Endothelial cell of umbilical vein (primary cell): ENCODE measurements at regions of chr2 and their contacts with region 1.

Region 1: DNA sequence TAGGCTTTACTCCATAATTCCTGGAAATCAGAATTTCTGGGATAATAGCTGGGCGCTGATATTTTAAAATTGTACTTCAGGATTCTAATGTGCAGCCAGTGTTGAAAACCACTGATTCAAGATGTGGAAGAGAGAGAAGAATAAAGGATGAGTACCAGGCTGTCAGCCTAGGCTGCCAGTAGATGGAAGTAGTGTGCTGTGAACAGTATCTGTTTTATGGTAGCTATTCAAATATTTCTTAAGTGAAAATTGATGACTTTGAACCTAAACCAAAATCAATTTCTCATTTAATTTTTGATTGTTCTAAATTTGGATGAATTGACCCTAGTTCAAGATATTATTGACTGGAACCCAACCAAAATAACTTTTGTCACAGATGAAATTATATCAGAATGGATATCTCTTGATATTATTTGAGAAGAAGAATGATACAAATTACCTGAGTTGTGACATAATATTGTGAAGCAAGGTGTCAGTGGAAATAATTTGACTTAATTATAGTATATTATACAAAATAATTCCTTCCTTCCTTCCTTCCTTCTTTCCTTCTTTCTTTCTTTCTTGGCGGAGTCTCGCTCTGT is 88.1 kb downstream of the COMMD1 start:
- DNase-seq: peak; percentile 72
- H3K4me3 ChIP-seq: no peak overlapping the region
- H3K27ac ChIP-seq: no peak overlapping the region
- H3K4me1 ChIP-seq: no peaks in the 10 kb centered on the region
- H3K27me3 ChIP-seq: no peaks in the 10 kb centered on the region
- CTCF ChIP-seq: peak; percentile 50 to 59
- POLR2A ChIP-seq: no peak

Region 2: GRCh38 chr2:61922714-61923113 is 70.8 kb before region 1 on chr2:
- CTCF ChIA-PET with region 1: interaction called, 4 read pairs
- POLR2A ChIA-PET with region 1: no interaction called
- dilution Hi-C with region 1: no loop called
- intact Hi-C with region 1: loop called (anchors 2 kb)
- DNase-seq: no peak
- H3K4me3 ChIP-seq: no peak overlapping the region
- H3K27ac ChIP-seq: no peak overlapping the region
- H3K4me1 ChIP-seq: no peaks in the 10 kb centered on the region
- H3K27me3 ChIP-seq: no peaks in the 10 kb centered on the region
- CTCF ChIP-seq: no peak
- POLR2A ChIP-seq: no peak

Region 3: GRCh38 chr2:62195421-62196277 is 202.1 kb after region 1 on chr2 and contains the start of gene B3GNT2:
- CTCF ChIA-PET with region 1: interaction called, 10 read pairs
- POLR2A ChIA-PET with region 1: no interaction called
- dilution Hi-C with region 1: no loop called
- intact Hi-C with region 1: loop called (anchors 5 kb)
- DNase-seq: peak; percentile 70
- H3K4me3 ChIP-seq: peak within 1 kb of the TSS; percentile 82 to 98 (median 98)
- H3K27ac ChIP-seq: peak within 1 kb of the TSS; percentile 45
- H3K4me1 ChIP-seq: peaks cover 13% of the 10 kb centered on the region
- H3K27me3 ChIP-seq: peaks cover 0 to under 1% of the 10 kb centered on the region in 2 experiments
- CTCF ChIP-seq: no peak
- POLR2A ChIP-seq: peak; percentile 82
- total RNA-seq, gene B3GNT2: 17.8 and 21.2 TPM in 2 replicates

Region 4: DNA sequence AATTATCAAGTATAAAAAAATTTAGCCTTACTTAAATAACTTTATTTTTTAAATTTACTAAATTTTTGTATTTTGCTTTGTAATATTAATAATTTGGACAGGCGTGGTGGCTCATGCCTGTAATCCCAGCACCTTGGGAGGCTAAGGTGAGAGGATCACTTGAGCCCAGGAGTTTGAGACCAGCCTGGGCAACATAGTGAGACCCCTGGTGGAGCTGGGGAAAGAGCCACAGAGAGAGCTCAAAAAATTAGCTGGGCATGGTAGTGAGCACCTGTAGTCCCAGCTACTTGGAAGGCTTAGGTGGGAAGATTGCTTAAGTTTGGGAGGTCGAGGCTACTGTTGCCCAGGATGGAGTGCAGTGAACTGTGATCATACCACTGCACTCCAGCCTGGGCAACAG is 345.9 kb after region 1 on chr2:
- CTCF ChIA-PET with region 1: interaction called, 29 read pairs
- POLR2A ChIA-PET with region 1: no interaction called
- dilution Hi-C with region 1: no loop called
- intact Hi-C with region 1: no loop called
- DNase-seq: no peak
- H3K4me3 ChIP-seq: no peak overlapping the region
- H3K27ac ChIP-seq: no peak overlapping the region
- H3K4me1 ChIP-seq: no peaks in the 10 kb centered on the region
- H3K27me3 ChIP-seq: no peaks in the 10 kb centered on the region
- CTCF ChIP-seq: peak in 1 of 2 donors; percentile 13
- POLR2A ChIP-seq: no peak

Region 5: DNA sequence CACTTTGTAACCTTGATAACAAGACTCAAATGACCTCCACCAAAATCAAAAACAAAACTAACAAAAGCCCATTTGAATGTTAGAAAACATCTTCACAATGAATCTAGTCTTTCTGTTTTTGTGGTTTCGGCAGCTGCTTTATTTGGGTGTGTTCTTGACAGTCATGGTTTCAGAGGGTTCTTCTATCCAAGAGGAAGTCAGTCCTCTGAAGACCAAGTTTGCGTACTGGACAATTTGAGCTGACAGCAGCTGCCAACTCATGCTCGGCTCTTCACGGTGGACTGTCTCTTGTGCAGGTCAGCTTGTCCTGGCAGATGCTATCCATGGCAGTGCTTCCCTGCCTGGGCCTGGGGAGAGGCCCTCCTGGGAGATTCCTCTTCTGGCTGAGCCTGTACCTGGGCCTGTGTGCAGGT is 421.5 kb after region 1 on chr2:
- CTCF ChIA-PET with region 1: interaction called, 159 read pairs
- POLR2A ChIA-PET with region 1: no interaction called
- dilution Hi-C with region 1: no loop called
- intact Hi-C with region 1: loop called (anchors 1 kb)
- DNase-seq: no peak
- H3K4me3 ChIP-seq: no peak overlapping the region
- H3K27ac ChIP-seq: no peak overlapping the region
- H3K4me1 ChIP-seq: peaks cover 6% of the 10 kb centered on the region
- H3K27me3 ChIP-seq: no peaks in the 10 kb centered on the region
- CTCF ChIP-seq: no peak
- POLR2A ChIP-seq: no peak

Region 6: DNA sequence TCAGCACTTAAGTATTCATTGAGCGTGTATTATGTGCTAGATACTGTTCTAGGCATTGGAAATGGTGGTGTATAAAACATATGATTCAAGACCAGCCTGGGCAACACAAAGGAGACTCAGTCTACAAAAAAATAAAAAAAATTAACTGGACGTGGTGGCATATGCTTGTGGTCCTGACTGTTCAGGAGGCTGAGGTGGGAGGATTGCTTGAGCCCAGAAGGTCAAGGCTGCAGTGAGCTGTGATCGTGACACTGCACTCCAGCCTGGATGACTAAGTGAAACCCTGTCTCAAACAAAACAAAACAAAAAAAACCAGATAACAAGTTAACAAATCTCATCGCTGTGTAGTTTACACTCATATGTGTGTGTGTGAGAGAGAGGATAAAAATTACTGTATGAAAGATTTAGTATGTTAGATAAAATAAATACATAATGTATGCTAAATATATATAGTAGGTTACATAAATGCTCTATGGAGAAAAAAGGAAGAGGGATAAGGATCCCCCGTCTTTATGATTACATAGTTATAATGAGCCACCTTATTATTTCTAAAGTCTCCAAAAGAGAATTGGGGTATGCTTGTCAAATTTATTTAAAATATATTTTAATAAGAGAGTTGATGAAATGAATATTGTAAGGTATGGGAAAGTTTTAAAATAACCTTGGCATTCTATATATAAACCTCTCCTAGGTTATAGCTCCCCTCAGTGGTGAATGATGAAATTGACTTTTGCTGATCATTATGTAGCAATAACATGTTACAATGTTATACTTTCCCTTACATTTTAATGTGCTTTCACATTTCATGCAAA is 781.2 kb after region 1 on chr2:
- CTCF ChIA-PET with region 1: interaction called, 9 read pairs
- POLR2A ChIA-PET with region 1: no interaction called
- dilution Hi-C with region 1: no loop called
- intact Hi-C with region 1: loop called (anchors 2 kb)
- DNase-seq: peak; percentile 62
- H3K4me3 ChIP-seq: no peak overlapping the region
- H3K27ac ChIP-seq: no peak overlapping the region
- H3K4me1 ChIP-seq: no peaks in the 10 kb centered on the region
- H3K27me3 ChIP-seq: no peaks in the 10 kb centered on the region
- CTCF ChIP-seq: peak; percentile 38 to 41
- POLR2A ChIP-seq: no peak